ENCODE measurements at regions of chr19 and their contacts with region 1.

Region 1: GRCh38 chr19:4471403-4472173 is 509 bp upstream of the HDGFL2 start:
- DNase-seq: peak; percentile 100
- H3K4me3 ChIP-seq: peak overlapping the region; percentile 18 to 54 (median 34)
- H3K27ac ChIP-seq: peak overlapping the region; percentile 68
- H3K4me1 ChIP-seq: peaks cover 12% of the 10 kb centered on the region
- H3K27me3 ChIP-seq: no peaks in the 10 kb centered on the region
- CTCF ChIP-seq: no peak
- POLR2A ChIP-seq: peak; percentile 54

Region 2: GRCh38 chr19:4232958-4233853 is 238.4 kb before region 1 on chr19:
- CTCF ChIA-PET with region 1: no interaction called
- POLR2A ChIA-PET with region 1: no interaction called
- dilution Hi-C with region 1: no loop called
- intact Hi-C with region 1: no loop called
- DNase-seq: no peak
- H3K4me3 ChIP-seq: no peak overlapping the region
- H3K27ac ChIP-seq: no peak overlapping the region
- H3K4me1 ChIP-seq: no peaks in the 10 kb centered on the region
- H3K27me3 ChIP-seq: peaks cover 0 to 4% of the 10 kb centered on the region in 2 experiments
- CTCF ChIP-seq: peak; percentile 63 to 80
- POLR2A ChIP-seq: no peak

Region 3: DNA sequence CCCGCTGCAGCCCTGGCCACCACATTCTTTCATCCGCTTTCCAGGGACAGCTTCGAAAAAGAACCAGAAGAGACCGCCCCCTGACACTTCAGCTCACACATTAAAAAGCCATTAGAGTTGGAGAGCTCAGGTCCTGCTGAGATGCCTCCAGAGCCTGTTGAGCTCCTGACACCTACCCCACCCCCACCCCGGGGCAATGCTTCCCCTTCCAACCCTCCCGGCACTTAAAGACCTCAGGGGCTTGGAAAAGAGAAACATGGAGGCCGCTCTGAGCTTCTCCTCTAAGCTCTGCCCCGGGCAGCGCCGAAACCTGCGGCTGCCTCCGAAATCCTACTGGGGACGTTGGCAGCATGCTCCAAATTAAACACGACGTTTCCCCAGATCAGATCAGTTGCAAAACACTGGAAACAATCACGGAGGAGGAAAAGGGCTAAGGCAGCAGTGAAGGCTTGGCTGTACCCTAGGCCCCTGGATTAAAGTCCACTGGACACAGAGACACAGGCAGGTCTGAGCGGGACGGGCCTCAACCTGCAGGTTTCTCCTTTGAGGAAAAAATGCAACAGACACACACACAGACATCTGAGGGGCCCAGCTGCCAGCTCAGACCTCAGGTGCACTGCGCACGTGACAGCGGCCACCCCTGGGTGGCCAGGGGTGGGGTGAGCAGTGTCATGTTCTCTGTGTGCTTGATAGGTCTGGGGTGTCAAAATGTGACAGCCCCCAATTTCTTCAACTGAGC is 80.9 kb before region 1 on chr19:
- CTCF ChIA-PET with region 1: no interaction called
- POLR2A ChIA-PET with region 1: interaction called, 4 read pairs
- dilution Hi-C with region 1: no loop called
- intact Hi-C with region 1: loop called (anchors 1 kb)
- DNase-seq: peak; percentile 50
- H3K4me3 ChIP-seq: peak overlapping the region in 1 of 3 experiments; percentile 1
- H3K27ac ChIP-seq: peak overlapping the region; percentile 88
- H3K4me1 ChIP-seq: peaks cover 68% of the 10 kb centered on the region
- H3K27me3 ChIP-seq: no peaks in the 10 kb centered on the region
- CTCF ChIP-seq: no peak
- POLR2A ChIP-seq: peak; percentile 43

Region 4: GRCh38 chr19:4445963-4446703 is 25.5 kb before region 1 on chr19:
- CTCF ChIA-PET with region 1: no interaction called
- POLR2A ChIA-PET with region 1: no interaction called
- dilution Hi-C with region 1: no loop called
- intact Hi-C with region 1: no loop called
- DNase-seq: no peak
- H3K4me3 ChIP-seq: no peak overlapping the region
- H3K27ac ChIP-seq: no peak overlapping the region
- H3K4me1 ChIP-seq: no peaks in the 10 kb centered on the region
- H3K27me3 ChIP-seq: no peaks in the 10 kb centered on the region
- CTCF ChIP-seq: no peak
- POLR2A ChIP-seq: no peak

Region 5: GRCh38 chr19:4457654-4458395 is 13.8 kb before region 1 on chr19 and contains the start of gene UBXN6:
- CTCF ChIA-PET with region 1: interaction called, 9 read pairs
- POLR2A ChIA-PET with region 1: interaction called, 11 read pairs
- dilution Hi-C with region 1: no loop called
- intact Hi-C with region 1: loop called (anchors 1 kb)
- DNase-seq: peak; percentile 96
- H3K4me3 ChIP-seq: peak within 1 kb of the TSS; percentile 62 to 72 (median 69)
- H3K27ac ChIP-seq: peak within 1 kb of the TSS; percentile 43
- H3K4me1 ChIP-seq: peaks cover 14% of the 10 kb centered on the region
- H3K27me3 ChIP-seq: no peaks in the 10 kb centered on the region
- CTCF ChIP-seq: no peak
- POLR2A ChIP-seq: peak; percentile 40
- total RNA-seq, gene UBXN6: 78.5 and 84.5 TPM in 2 replicates